Vagina (tissue), 2 donors: ENCODE measurements at regions of chr16 and their contacts with region 1.

Region 1: GRCh38 chr16:30657866-30658730 is at the start of gene FBRS:
- DNase-seq: peak; percentile 100
- H3K4me3 ChIP-seq: peak within 1 kb of the TSS; percentile 83 to 88
- H3K27ac ChIP-seq: peak within 1 kb of the TSS; percentile 99
- H3K4me1 ChIP-seq: peaks cover 44% of the 10 kb centered on the region
- H3K27me3 ChIP-seq: no peaks in the 10 kb centered on the region
- CTCF ChIP-seq: peak; percentile 43 to 69 (median 52)
- POLR2A ChIP-seq: peak in 1 of 2 donors; percentile 92
- total RNA-seq, gene FBRS: 28.7 TPM

Region 2: DNA sequence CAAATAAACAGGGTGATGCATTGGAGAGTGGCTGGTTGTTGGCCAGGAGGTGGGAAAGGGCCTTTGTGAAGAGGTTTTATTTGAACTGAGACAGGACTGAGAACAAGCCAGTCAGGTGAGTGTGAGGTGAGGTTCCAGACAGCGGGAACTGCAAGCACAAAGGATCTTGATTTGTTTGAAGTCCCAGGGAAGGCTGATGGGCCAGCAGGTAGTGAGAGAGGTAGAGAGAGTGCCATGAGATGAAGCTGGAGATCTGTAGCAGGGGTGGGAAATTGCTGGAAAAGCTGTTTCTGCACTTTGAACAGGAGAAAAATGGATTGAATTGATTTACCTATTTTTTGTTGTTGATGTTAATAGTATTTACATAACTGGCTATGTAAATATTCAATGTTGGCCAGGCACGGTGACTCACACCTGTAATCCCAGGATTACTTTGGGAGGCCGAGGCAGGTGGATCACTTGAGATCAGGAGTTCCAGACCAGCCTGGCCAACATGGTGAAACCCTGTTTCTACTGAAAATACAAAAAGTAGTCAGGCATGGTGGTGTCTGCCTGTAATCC is 220.5 kb before region 1 on chr16:
- intact Hi-C with region 1: no loop called
- DNase-seq: no peak
- H3K4me3 ChIP-seq: no peak overlapping the region
- H3K27ac ChIP-seq: no peak overlapping the region
- H3K4me1 ChIP-seq: no peaks in the 10 kb centered on the region
- H3K27me3 ChIP-seq: no peaks in the 10 kb centered on the region
- CTCF ChIP-seq: no peak
- POLR2A ChIP-seq: no peak

Region 3: DNA sequence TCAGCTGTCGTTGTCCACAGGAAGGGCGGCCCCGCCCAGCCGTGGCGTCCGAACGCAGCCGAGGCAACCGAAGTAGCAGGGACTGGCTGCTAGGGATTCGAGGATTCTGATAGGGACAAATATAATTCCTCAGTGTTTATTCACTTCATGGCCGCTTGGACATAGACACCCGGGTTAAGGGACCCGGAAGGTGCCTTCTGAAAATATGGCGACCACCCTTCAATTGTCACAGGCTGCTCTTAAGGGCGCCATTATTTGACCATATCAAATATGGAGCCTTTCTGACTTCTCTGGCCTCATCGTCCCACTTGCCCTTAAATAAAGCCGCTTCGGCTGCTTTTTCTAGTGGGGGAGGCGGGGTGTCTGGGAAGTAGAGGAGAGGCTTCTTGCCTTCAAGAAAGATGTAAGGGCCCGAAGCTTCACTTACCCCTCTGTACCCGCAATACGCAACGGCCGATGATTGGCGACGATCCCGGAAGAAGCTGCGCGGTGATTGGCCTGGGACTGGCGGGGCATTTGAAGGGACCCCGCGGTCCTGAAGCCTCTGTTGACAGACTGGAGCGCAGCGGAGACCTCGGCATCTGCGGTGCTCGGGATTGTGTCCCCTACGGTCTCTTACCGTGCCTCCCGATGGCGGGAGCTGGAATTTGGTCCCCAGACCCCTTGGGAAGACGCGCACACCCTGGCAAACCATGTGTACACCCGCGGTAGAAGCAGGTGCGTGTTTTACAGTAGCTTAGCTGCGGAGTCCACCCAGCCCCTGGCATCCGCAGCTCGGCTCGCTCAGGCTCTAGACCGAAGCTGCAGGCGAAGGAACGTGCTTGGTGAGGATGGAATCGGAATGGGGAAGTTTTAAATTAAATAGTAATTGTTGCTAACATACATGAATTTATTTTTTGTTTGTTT is 86.2 kb before region 1 on chr16 and contains the start of gene ZNF688:
- intact Hi-C with region 1: loop called (anchors 5 kb)
- DNase-seq: peak in 1 of 2 donors; percentile 99
- H3K4me3 ChIP-seq: peak within 1 kb of the TSS; percentile 70 to 77
- H3K27ac ChIP-seq: peak within 1 kb of the TSS; percentile 98
- H3K4me1 ChIP-seq: peaks cover 48% of the 10 kb centered on the region
- H3K27me3 ChIP-seq: no peaks in the 10 kb centered on the region
- CTCF ChIP-seq: no peak
- POLR2A ChIP-seq: peak in 1 of 2 donors; percentile 43
- total RNA-seq, gene ZNF688: 20.1 TPM